Right ventricle myocardium superior (tissue), 1 donor: ENCODE measurements at regions of chr7 and their contacts with region 1.

Region 1: GRCh38 chr7:128791121-128791961 is 427 bp upstream of the CCDC136 start:
- DNase-seq: peak; percentile 88
- ATAC-seq: peak; percentile 94

Region 2: DNA sequence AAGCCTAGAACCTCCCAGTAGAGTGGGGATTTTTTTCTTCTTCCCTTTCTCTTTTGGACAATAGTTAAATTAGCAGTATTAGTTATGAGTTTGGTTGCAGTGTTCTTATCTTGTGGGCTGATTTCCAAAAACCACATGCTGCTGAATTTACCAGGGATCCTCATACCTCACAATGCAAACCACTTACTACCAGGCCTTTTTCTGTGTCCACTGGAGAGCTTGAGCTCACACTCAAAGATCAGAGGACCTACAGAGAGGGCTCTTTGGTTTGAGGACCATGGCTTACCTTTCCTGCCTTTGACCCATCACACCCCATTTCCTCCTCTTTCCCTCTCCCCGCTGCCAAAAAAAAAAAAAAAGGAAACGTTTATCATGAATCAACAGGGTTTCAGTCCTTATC is 21.1 kb before region 1 on chr7:
- intact Hi-C with region 1: no loop called
- DNase-seq: no peak
- ATAC-seq: no peak

Region 3: GRCh38 chr7:128830231-128831177 is 39.2 kb after region 1 on chr7 and contains the start of gene FLNC:
- intact Hi-C with region 1: loop called (anchors 5 kb)
- DNase-seq: peak; percentile 77
- ATAC-seq: peak; percentile 23
- total RNA-seq, gene FLNC: 601 TPM